Posterior vena cava (tissue), 2 donors: ENCODE measurements at regions of chr20 and their contacts with region 1.

Region 1: DNA sequence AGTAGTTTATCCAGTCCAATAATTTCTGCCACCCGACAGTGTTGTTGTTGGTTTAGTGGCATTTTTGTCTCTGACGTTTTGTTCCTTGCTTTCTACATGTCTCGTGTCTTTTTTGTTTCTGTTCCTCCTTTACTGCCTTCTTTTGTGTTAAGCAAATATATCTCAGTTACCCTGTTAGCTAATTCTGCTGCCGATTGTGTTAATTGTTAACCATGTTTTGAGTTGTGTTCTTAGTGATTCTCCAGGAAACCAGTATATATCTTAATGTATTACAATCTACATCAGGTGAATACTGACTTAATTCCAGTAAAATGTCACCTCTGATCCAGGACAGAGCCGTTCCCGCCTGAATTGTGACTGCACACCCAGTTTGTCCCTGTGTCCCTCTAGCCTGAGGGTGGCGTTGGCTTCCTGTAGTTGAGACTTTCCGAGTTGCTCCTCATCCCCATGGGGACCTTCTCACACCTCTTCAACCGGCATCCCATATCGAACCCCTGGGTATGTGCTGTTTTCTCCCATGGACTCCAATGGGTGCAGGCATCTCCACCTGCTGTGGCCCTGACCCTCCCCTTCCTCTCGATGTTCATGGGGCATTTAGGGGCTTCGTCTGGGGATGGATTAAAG is 35.8 kb upstream of the BHLHE23 start:
- DNase-seq: no peak

Region 2: DNA sequence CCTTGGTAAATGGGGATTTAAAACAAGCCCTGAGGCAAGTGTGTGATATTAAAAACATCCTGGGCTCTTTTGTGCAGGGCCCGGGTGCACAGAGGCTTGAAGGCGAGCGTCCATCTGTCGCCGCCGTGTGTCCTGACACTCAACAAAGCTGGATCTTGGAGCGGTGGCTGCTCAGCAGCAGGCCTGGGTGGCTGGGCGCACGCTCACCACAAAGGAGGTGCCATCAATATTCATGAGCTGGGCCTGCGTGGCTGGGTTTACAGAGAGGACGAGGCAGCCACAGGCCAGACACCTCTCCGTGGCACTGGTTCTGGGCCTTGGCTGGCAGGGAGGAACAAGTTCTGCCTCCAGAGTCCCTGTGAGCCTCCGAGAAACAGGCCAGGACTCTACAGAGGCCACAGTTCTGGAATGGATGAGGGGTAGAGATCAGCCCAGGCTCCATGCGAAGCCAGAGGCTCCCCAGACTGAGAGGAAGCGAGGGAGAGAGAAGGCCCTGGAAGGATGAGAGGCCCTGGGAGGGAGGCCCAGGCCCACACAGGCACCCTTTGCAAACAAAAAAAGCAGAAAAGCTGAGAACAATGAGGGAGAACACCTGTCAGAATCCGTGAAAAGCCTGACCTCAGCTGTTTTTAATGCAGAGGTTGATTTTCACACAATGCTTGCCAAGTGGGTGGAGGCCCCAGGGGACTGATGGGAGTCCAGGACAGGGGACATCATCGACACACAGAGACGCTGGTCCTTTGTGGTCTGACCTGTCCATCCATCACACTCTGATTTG is 57.7 kb before region 1 on chr20:
- intact Hi-C with region 1: no loop called
- DNase-seq: no peak

Region 3: DNA sequence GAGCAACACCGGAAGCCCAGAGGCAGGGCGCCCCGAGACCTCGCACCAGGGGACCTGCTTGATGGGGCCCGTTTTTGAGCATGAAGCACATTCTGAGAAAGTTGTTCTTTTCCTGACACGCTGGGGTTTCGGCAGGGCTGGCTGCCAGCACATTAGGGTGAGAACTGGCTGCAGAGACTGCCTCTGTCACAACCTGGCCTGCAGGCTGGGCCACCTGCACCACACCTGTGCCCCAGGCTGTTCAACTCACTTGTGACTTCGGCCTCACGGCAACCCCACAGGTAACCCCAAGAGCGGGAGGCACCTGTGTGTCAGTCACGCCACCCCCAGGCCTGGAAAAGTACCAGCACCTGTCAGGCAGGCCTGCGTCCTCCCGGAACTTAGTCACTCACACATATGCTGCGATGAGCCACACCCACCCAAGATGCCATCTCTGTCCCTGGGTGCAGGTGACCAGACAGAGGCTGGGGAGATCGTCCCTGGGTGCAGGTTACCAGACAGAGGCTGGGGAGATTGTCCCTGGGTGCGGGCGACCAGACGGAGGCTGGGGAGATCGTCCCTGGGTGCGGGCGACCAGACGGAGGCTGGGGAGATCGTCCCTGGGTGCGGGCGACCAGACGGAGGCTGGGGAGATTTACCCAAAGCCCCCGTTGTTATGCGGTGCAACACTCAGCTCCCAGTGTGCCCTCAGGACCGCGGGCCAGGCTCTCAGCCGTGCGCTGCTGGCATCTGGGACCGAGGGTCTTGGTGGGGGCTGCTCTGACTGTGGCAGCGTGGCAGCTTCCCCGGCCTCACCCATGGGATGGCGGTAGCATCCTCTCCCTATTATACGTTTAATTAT is 46.7 kb after region 1 on chr20:
- intact Hi-C with region 1: no loop called
- DNase-seq: peak; percentile 74

Region 4: GRCh38 chr20:63254536-63255384 is 212.2 kb after region 1 on chr20:
- intact Hi-C with region 1: loop called in 1 of 2 experiments (anchors 5 kb)
- DNase-seq: no peak